GM12878 (cell line): ENCODE measurements at regions of chr21 and their contacts with region 1.

Region 1: DNA sequence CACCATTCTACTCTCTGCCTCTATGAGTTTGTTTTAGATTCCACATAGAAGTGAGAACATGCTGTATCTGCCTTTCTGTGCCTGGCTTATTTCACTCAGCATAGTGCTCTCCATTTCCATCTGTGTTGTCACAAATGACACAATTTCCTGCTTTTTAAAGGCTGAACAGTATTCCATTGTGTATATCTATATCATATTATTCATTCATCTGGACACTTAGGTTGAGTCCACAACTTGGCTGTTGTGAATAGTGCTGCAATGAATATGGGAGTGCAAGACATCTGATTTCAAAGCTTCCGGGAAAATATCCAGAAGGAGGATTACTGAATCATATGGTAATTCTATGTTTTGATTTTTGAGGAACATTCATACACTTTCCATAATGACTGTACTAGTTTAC is 20.1 kb upstream of the DONSON start:
- DNase-seq: no peak
- ATAC-seq: no peak
- H3K4me3 ChIP-seq: no peak overlapping the region
- H3K27ac ChIP-seq: no peak overlapping the region
- H3K4me1 ChIP-seq: no peaks in the 10 kb centered on the region
- H3K27me3 ChIP-seq: no peaks in the 10 kb centered on the region
- CTCF ChIP-seq: no peak
- EP300 ChIP-seq: no peak
- POLR2A ChIP-seq: no peak
- RAD21 ChIP-seq: no peak

Region 2: GRCh38 chr21:33339918-33340317 is 268.6 kb before region 1 on chr21:
- CTCF ChIA-PET with region 1: interaction called, 10 read pairs
- POLR2A ChIA-PET with region 1: no interaction called
- RAD21 ChIA-PET with region 1: no interaction called
- SMC1A ChIA-PET with region 1: interaction called, 3 read pairs
- in situ Hi-C with region 1: no loop called
- intact Hi-C with region 1: no loop called
- DNase-seq: no peak
- ATAC-seq: peak; percentile 31; the same call in 2 of the 3 replicates
- H3K4me3 ChIP-seq: no peak overlapping the region
- H3K27ac ChIP-seq: peak overlapping the region; percentile 61
- H3K4me1 ChIP-seq: peaks cover 21% of the 10 kb centered on the region
- H3K27me3 ChIP-seq: no peaks in the 10 kb centered on the region
- CTCF ChIP-seq: no peak
- EP300 ChIP-seq: no peak
- POLR2A ChIP-seq: no peak
- RAD21 ChIP-seq: no peak

Region 3: DNA sequence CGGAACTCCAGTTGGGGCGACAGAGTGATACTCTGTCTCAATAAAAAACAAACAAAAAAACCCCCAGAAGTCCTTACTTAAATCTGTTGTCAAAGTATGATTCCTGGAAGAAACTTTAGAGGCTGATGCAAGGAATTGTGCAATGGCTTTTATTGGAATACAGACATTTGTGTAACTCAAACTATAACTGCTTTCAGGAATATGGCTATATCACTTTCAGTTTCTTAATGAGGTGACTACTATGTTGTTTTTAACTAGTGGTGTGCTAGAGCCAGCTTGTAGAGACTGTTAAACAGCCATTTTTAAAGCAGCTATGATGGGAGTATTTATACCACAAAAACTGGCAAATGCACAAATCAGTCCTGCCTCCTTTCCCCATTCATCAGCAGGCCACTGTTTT is 94.3 kb before region 1 on chr21:
- CTCF ChIA-PET with region 1: interaction called, 10 read pairs
- POLR2A ChIA-PET with region 1: no interaction called
- RAD21 ChIA-PET with region 1: no interaction called
- SMC1A ChIA-PET with region 1: interaction called, 3 read pairs
- in situ Hi-C with region 1: no loop called
- intact Hi-C with region 1: no loop called
- DNase-seq: no peak
- ATAC-seq: no peak
- H3K4me3 ChIP-seq: no peak overlapping the region
- H3K27ac ChIP-seq: no peak overlapping the region
- H3K4me1 ChIP-seq: no peaks in the 10 kb centered on the region
- H3K27me3 ChIP-seq: no peaks in the 10 kb centered on the region
- CTCF ChIP-seq: no peak
- EP300 ChIP-seq: no peak
- POLR2A ChIP-seq: no peak
- RAD21 ChIP-seq: no peak

Region 4: GRCh38 chr21:33558777-33559421 is 49.7 kb before region 1 on chr21:
- CTCF ChIA-PET with region 1: interaction called, 10 read pairs
- POLR2A ChIA-PET with region 1: no interaction called
- RAD21 ChIA-PET with region 1: interaction called, 4 read pairs
- SMC1A ChIA-PET with region 1: interaction called, 8 read pairs
- in situ Hi-C with region 1: no loop called
- intact Hi-C with region 1: no loop called
- DNase-seq: no peak
- ATAC-seq: no peak
- H3K4me3 ChIP-seq: no peak overlapping the region
- H3K27ac ChIP-seq: no peak overlapping the region
- H3K4me1 ChIP-seq: no peaks in the 10 kb centered on the region
- H3K27me3 ChIP-seq: no peaks in the 10 kb centered on the region
- CTCF ChIP-seq: no peak
- EP300 ChIP-seq: no peak
- POLR2A ChIP-seq: no peak
- RAD21 ChIP-seq: no peak

Region 5: DNA sequence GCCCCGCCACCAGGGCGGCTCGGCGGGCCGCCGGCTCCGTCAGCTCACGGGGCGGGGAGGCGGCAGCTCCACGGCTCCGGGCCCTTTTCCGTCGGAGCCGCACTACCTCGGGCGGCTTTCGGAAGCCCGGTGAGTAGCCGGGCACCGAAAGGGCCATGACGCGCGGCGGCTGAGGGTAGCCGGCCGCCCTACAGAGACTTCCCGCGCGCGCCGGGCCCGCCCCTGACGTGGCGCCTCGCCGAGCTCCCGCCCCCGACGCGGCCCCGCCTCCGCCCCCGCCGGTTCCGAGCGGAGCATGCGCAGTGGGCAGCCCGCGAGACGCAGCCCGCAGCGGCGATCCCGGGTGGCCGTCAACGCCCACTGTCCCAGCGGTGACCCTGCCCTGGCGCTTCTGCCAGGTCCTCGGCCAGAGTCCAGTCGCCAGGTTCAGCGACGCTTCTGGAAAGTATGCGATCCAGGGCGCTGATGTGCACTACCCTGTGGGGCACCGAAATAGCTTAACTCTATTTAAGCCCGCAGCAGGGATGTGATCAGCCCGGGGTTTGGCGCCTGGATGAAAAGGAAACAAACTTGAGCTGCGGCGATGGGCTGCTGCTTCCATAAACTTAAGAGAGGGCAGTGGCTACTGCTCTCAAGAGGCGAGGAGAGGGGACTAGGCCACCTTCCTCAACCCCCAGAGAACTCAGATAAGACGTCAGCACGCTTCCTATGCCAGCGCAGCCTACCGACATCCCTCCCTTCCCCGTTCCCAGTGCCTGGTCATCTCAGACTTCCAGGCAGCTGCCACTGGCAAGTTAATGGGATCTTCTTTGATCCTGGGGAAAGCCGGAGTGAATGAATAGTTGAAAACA is 19.8 kb before region 1 on chr21 and contains the start of gene DONSON:
- CTCF ChIA-PET with region 1: interaction called, 68 read pairs
- POLR2A ChIA-PET with region 1: no interaction called
- RAD21 ChIA-PET with region 1: interaction called, 15 read pairs
- SMC1A ChIA-PET with region 1: interaction called, 6 read pairs
- in situ Hi-C with region 1: no loop called
- intact Hi-C with region 1: no loop called
- DNase-seq: peak; percentile 31
- ATAC-seq: peak; percentile 96
- H3K4me3 ChIP-seq: peak within 1 kb of the TSS; percentile 92
- H3K27ac ChIP-seq: peak within 1 kb of the TSS; percentile 82
- H3K4me1 ChIP-seq: no peaks in the 10 kb centered on the region
- H3K27me3 ChIP-seq: no peaks in the 10 kb centered on the region
- CTCF ChIP-seq: no peak
- EP300 ChIP-seq: no peak
- POLR2A ChIP-seq: peak; percentile 84
- RAD21 ChIP-seq: no peak
- polyA plus RNA-seq, gene DONSON: 13.6 to 25.8 TPM